ENCODE measurements at regions of chr17 and their contacts with region 1.

Region 1: GRCh38 chr17:47789611-47790561 is 31.7 kb downstream of the OSBPL7 start:
- DNase-seq: peak; percentile 34
- H3K4me3 Mint-ChIP-seq: peak overlapping the region; percentile 66
- H3K27ac Mint-ChIP-seq: no peak overlapping the region
- H3K4me1 Mint-ChIP-seq: peaks cover 12% of the 10 kb centered on the region
- H3K27me3 Mint-ChIP-seq: peaks cover 66% of the 10 kb centered on the region

Region 2: GRCh38 chr17:47733047-47733673 is 56.7 kb before region 1 on chr17 and contains the start of gene TBX21:
- intact Hi-C with region 1: loop called (anchors 5 kb)
- DNase-seq: peak; percentile 82
- H3K4me3 Mint-ChIP-seq: peak within 1 kb of the TSS; percentile 100
- H3K27ac Mint-ChIP-seq: peak within 1 kb of the TSS; percentile 91
- H3K4me1 Mint-ChIP-seq: peaks cover 62% of the 10 kb centered on the region
- H3K27me3 Mint-ChIP-seq: no peaks in the 10 kb centered on the region
- total RNA-seq, gene TBX21: 40.4 and 40.6 TPM in 2 replicates